Activated CD4-positive, alpha-beta T cell treated with anti-CD3 and anti-CD28 coated beads, Interleukin-2, amount 10 ng/mL, durations not matched to agents 24 days and 14 days (primary cell): ENCODE measurements at regions of chr20 and their contacts with region 1.

Region 1: GRCh38 chr20:1437235-1437904 is 29.3 kb downstream of the NSFL1C start:
- DNase-seq: peak; percentile 93
- H3K4me3 Mint-ChIP-seq: peak overlapping the region; percentile 19
- H3K27ac Mint-ChIP-seq: peak overlapping the region; percentile 52
- H3K4me1 Mint-ChIP-seq: peaks cover 26% of the 10 kb centered on the region
- H3K27me3 Mint-ChIP-seq: peaks cover 4% of the 10 kb centered on the region

Region 2: GRCh38 chr20:1225783-1226654 is 211.4 kb before region 1 on chr20 and contains the start of gene RAD21L1:
- intact Hi-C with region 1: loop called (anchors 5 kb)
- DNase-seq: peak; percentile 88
- H3K4me3 Mint-ChIP-seq: peak within 1 kb of the TSS; percentile 86
- H3K27ac Mint-ChIP-seq: peak within 1 kb of the TSS; percentile 11
- H3K4me1 Mint-ChIP-seq: peaks cover 16% of the 10 kb centered on the region
- H3K27me3 Mint-ChIP-seq: peaks cover 50% of the 10 kb centered on the region
- total RNA-seq, gene RAD21L1: not detected in 2 replicates

Region 3: DNA sequence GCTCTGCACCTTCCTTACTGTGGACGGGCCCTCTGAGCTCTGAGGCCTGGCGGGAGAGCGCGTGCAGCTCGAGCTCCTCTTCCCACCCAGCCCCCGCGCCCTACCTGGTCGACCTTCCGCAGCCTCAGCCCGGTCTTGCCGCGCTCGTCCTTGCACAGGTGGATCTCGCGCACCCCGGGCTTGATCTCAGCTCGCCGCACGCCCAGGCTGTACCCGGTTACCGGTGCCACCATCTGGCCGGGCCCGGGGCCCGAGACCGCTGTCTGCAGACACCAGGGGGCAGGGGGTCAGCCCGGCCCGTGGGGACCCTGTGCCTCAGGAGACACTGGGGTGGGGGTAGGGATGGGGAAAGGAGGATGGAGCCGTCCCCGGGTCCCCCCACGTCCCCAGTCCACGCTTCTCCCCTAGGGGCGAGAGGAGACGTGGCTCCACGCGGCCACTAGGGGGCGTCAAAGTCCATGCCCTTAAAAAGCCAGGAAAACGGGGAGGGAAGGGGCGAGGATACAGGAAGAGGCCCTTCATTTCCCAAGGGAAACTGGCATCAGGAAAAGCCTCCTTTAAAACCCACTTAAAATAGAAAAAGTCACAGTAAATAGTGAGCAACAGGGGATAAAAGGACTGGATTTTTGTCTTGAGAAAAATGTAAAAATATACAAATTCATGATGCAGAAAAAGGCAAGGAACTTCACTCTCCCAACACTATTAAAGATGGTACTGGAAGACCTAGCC is 124.0 kb before region 1 on chr20:
- intact Hi-C with region 1: loop called (anchors 1 kb)
- DNase-seq: peak; percentile 89
- H3K4me3 Mint-ChIP-seq: no peak overlapping the region
- H3K27ac Mint-ChIP-seq: no peak overlapping the region
- H3K4me1 Mint-ChIP-seq: peaks cover 17% of the 10 kb centered on the region
- H3K27me3 Mint-ChIP-seq: no peaks in the 10 kb centered on the region

Region 4: GRCh38 chr20:1357921-1358671 is 79.3 kb before region 1 on chr20:
- intact Hi-C with region 1: loop called (anchors 2 kb)
- DNase-seq: peak; percentile 86
- H3K4me3 Mint-ChIP-seq: peak overlapping the region; percentile 69
- H3K27ac Mint-ChIP-seq: peak overlapping the region; percentile 83
- H3K4me1 Mint-ChIP-seq: peaks cover 51% of the 10 kb centered on the region
- H3K27me3 Mint-ChIP-seq: no peaks in the 10 kb centered on the region

Region 5: DNA sequence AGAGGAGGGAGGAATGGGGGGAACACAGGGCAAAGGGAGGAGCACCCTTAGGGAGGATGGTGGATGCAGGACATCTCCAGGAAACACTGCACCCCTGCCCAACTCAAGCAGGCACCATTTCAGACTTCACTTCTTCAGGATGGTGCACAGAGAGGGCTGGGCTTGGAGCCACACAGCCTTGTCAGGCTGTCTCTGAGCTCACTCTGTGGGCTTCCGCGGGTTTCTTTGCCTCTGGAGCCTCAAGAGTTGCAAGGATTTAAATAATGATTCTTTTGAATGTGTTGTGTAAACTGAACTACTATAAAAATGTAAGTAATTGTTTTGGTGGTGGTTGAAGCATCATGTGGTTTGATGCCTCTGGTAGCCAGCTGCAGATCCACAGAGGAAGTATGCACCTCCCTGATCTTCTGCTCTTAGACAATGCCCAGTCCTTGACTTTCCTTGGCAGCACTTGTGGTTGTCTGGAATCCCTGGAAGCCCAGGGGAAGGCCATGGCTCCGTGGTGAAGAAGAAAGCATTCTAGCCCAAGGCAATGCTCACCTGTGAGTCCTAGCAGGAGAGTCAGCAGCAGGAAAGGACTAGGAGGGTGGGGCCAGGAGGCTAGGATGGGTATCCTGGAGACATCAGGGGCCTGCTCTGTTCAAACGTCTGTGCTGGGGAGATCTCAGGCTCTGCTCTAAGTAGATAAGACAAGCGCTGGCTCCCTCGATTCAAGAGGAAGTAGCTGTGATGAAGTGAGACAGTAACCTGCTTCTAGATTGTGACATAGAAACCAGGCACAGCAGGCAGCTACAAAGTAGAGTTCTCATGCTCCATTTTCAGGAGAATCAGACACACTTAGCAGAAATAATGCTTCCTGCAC is 270.4 kb after region 1 on chr20:
- intact Hi-C with region 1: no loop called
- DNase-seq: peak; percentile 64
- H3K4me3 Mint-ChIP-seq: peak overlapping the region; percentile 9
- H3K27ac Mint-ChIP-seq: no peak overlapping the region
- H3K4me1 Mint-ChIP-seq: peaks cover 22% of the 10 kb centered on the region
- H3K27me3 Mint-ChIP-seq: no peaks in the 10 kb centered on the region